ENCODE measurements at regions of chr1 and their contacts with region 1.

Region 1: GRCh38 chr1:101238681-101239094 is 1.9 kb downstream of the S1PR1 start:
- DNase-seq: no peak
- ATAC-seq: peak; percentile 70
- H3K4me3 ChIP-seq: peak overlapping the region; percentile 81
- H3K27ac ChIP-seq: peak overlapping the region; percentile 43
- H3K4me1 ChIP-seq: peaks cover 32% of the 10 kb centered on the region
- H3K27me3 ChIP-seq: no peaks in the 10 kb centered on the region
- CTCF ChIP-seq: peak; percentile 90 to 99 (median 97)
- EP300 ChIP-seq: no peak
- POLR2A ChIP-seq: 0 out of 2 replicates have a peak, but pooled peaks have one; percentile 9
- RAD21 ChIP-seq: peak; percentile 89

Region 2: GRCh38 chr1:100299521-100300222 is 939.0 kb before region 1 on chr1:
- CTCF ChIA-PET with region 1: no interaction called
- POLR2A ChIA-PET with region 1: no interaction called
- RAD21 ChIA-PET with region 1: no interaction called
- SMC1A ChIA-PET with region 1: no interaction called
- in situ Hi-C with region 1: no loop called
- intact Hi-C with region 1: no loop called
- DNase-seq: no peak
- ATAC-seq: no peak; the same call in 2 of the 3 replicates
- H3K4me3 ChIP-seq: no peak overlapping the region
- H3K27ac ChIP-seq: no peak overlapping the region
- H3K4me1 ChIP-seq: no peaks in the 10 kb centered on the region
- H3K27me3 ChIP-seq: no peaks in the 10 kb centered on the region
- CTCF ChIP-seq: no peak
- EP300 ChIP-seq: no peak
- POLR2A ChIP-seq: peak; percentile 33; the same call in 1 of the 2 replicates
- RAD21 ChIP-seq: no peak

Region 3: GRCh38 chr1:100921109-100921706 is 317.5 kb before region 1 on chr1:
- CTCF ChIA-PET with region 1: interaction called, 27 read pairs
- POLR2A ChIA-PET with region 1: no interaction called
- RAD21 ChIA-PET with region 1: interaction called, 6 read pairs
- SMC1A ChIA-PET with region 1: interaction called, 13 read pairs
- in situ Hi-C with region 1: no loop called
- intact Hi-C with region 1: loop called (anchors 1 kb)
- DNase-seq: no peak
- ATAC-seq: peak; percentile 59
- H3K4me3 ChIP-seq: no peak overlapping the region
- H3K27ac ChIP-seq: no peak overlapping the region
- H3K4me1 ChIP-seq: no peaks in the 10 kb centered on the region
- H3K27me3 ChIP-seq: no peaks in the 10 kb centered on the region
- CTCF ChIP-seq: peak; percentile 39 to 63 (median 39); a peak in 5 of 6 replicates
- EP300 ChIP-seq: no peak
- POLR2A ChIP-seq: no peak
- RAD21 ChIP-seq: peak; percentile 70

Region 4: DNA sequence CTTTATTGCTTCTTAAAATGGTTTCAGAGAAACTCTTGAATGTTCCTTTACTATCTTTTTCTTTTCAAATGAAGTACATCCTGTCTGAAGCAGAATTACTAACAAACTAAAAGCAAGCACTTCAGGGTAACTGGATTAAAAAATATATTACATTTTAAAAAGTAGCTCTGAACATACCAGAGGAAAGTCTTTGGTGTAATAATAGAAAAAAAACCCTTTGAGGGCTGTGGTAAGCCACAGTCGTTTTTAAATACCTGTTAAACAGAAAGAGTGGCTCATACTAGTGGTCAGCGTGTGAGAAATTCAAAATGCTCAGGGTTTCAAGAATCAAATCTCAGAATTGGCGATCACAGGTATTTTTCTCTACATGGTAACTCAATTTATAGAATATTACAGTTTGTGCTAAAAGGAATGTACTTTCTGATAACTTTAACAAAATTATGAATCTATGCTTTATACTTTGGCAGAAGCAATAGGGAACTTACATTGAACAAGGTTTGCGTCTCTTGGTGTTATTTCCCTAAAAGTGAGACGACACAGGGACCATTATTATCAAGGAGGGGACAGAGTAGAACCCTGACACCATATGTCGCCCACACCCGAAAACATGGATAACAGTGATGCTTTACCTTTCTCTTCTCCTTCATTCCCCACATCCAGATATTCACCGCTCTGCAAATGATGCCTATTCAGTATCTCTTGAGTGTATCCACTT is 116.1 kb before region 1 on chr1:
- CTCF ChIA-PET with region 1: interaction called, 4 read pairs
- POLR2A ChIA-PET with region 1: interaction called, 3 read pairs
- RAD21 ChIA-PET with region 1: interaction called, 4 read pairs
- SMC1A ChIA-PET with region 1: interaction called, 12 read pairs
- in situ Hi-C with region 1: no loop called
- intact Hi-C with region 1: no loop called
- DNase-seq: no peak
- ATAC-seq: peak; percentile 98
- H3K4me3 ChIP-seq: no peak overlapping the region
- H3K27ac ChIP-seq: no peak overlapping the region; the same call in 1 of the 2 replicates
- H3K4me1 ChIP-seq: peaks cover 21% of the 10 kb centered on the region
- H3K27me3 ChIP-seq: no peaks in the 10 kb centered on the region; a peak in 1 of 4 replicates
- CTCF ChIP-seq: no peak
- EP300 ChIP-seq: peak in 1 of 2 experiments; percentile 63; a peak in 1 of 4 replicates
- POLR2A ChIP-seq: no peak
- RAD21 ChIP-seq: peak; percentile 41

Region 5: DNA sequence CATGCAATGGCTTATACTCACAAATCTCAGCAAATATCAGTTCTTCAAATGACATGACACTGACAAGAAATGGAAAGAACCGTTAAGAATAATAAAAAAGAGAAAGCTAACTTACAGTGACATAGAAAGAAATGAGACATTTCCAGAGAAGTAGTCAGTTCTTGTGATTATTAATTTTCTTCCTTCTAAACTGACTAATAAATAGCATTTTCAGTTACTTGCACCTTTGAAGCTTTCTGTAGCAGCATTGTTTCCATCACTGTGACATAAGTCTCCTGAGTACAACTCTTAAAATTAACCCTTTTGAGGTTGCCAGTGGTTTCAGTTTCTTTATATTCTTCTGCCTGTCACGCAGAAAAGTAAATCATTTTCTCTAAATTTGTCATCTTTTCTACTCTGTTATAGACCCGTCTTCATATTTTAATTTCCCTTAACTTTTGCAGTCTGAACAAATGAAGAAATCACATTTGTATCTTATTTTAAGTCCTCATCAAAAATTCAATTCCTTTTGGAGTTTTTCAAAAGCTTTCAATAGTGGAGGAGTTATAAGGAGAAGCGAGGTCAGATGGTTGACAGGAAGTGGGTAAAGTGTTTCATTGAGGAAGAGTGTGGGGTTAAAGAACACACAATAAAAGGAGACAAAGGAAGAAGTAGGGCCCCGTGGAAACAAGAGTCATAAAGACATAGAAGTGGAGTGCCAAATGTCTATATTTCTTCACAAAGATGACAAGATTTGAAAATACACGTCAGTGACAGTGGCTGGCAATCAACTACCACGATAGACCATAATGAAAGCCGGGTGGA is 59.8 kb before region 1 on chr1:
- CTCF ChIA-PET with region 1: interaction called, 17 read pairs
- POLR2A ChIA-PET with region 1: no interaction called
- RAD21 ChIA-PET with region 1: interaction called, 12 read pairs
- SMC1A ChIA-PET with region 1: interaction called, 13 read pairs
- in situ Hi-C with region 1: no loop called
- intact Hi-C with region 1: loop called (anchors 1 kb)
- DNase-seq: peak; percentile 80
- ATAC-seq: peak; percentile 88
- H3K4me3 ChIP-seq: peak overlapping the region; percentile 32; the same call in 1 of the 2 replicates
- H3K27ac ChIP-seq: peak overlapping the region; percentile 94
- H3K4me1 ChIP-seq: peaks cover 16% of the 10 kb centered on the region
- H3K27me3 ChIP-seq: no peaks in the 10 kb centered on the region
- CTCF ChIP-seq: no peak
- EP300 ChIP-seq: peak; percentile 90 to 95
- POLR2A ChIP-seq: no peak
- RAD21 ChIP-seq: peak; percentile 15; the same call in 1 of the 2 replicates

Region 6: DNA sequence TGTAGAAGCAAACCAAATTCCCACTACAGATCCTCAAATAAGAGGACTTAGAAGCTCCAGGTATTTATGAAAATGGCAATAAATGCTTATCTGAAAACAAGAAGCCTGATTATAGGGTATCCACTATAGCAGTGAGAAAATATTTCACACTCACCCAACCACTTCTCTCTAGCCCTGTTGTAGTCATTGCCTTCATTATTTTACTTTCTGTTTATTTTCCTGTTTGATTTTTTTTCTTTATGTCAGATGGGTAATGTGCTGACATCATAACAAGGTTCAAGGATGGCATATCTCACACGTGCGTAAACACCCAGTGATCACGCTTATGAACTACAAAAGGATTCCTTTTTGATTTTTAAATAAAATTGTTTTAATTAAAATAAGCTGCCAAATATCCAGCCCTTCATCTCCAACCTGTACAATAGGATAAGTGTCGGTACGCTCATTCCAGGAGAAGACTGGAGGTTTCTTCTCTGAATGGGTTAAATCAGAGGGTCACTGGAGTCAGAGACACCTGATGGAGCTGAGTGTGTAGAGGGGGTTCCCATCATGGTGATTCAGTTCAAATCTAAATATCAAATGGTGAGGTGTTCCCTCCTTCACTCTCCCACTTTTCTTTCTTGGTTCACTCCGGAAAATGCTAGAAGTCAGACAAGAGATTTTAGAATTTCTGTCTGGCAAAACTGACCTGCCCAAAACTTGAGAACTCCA is 10.1 kb before region 1 on chr1:
- CTCF ChIA-PET with region 1: interaction called, 12 read pairs
- POLR2A ChIA-PET with region 1: no interaction called
- RAD21 ChIA-PET with region 1: no interaction called
- SMC1A ChIA-PET with region 1: interaction called, 8 read pairs
- in situ Hi-C with region 1: no loop called
- intact Hi-C with region 1: no loop called
- DNase-seq: no peak
- ATAC-seq: no peak
- H3K4me3 ChIP-seq: no peak overlapping the region
- H3K27ac ChIP-seq: no peak overlapping the region
- H3K4me1 ChIP-seq: no peaks in the 10 kb centered on the region
- H3K27me3 ChIP-seq: no peaks in the 10 kb centered on the region
- CTCF ChIP-seq: no peak
- EP300 ChIP-seq: no peak
- POLR2A ChIP-seq: no peak
- RAD21 ChIP-seq: no peak

Region 7: DNA sequence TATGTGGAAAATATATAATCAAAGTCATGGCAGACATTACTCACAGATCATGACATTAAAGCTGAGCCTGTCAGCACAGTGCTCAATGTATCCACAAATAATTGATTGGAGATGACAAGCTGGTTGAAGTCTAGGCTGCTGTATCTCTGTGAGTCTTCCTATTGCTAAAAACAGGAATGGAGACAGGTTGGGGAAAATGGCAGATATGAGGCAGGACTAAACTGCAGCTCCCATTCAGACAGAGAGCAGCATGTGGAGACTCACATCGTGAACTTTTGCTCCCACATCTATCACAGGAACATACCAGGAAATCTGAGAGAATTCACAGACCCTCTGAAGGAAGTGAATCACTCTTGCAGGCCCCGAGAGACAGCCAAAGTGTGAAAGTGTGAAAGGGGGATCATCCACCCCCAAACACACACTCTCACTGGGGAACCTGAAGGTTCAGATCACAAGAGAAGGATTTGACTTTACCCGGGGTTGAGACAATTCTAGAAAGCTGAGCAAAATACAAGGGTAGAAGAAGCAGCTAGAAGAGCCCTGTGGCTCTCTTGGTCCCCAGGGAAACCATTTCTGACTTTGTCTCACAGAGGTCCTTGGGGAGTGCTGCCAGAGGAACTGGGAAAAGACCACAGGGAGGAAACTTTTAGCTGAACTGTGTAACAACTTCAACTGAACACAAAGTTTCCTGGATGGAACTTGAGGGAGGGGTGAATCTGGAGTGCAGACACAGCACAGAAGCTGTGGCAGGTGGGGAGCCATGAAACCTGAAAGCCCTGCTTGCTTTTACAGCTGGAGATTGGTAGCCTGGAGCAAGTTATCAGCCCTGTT is 171.6 kb after region 1 on chr1:
- CTCF ChIA-PET with region 1: interaction called, 4 read pairs
- POLR2A ChIA-PET with region 1: no interaction called
- RAD21 ChIA-PET with region 1: interaction called, 5 read pairs
- SMC1A ChIA-PET with region 1: interaction called, 6 read pairs
- in situ Hi-C with region 1: no loop called
- intact Hi-C with region 1: loop called (anchors 5 kb)
- DNase-seq: peak; percentile 99
- ATAC-seq: peak; percentile 64
- H3K4me3 ChIP-seq: no peak overlapping the region
- H3K27ac ChIP-seq: peak overlapping the region; percentile 98
- H3K4me1 ChIP-seq: peaks cover 51% of the 10 kb centered on the region
- H3K27me3 ChIP-seq: no peaks in the 10 kb centered on the region
- CTCF ChIP-seq: no peak
- EP300 ChIP-seq: peak in 1 of 2 experiments; percentile 67; a peak in 1 of 4 replicates
- POLR2A ChIP-seq: peak; percentile 59
- RAD21 ChIP-seq: peak; percentile 42; the same call in 1 of the 2 replicates

Measured in GM12878 (cell line).